ENCODE measurements at regions of chr1 and their contacts with region 1.

Region 1: DNA sequence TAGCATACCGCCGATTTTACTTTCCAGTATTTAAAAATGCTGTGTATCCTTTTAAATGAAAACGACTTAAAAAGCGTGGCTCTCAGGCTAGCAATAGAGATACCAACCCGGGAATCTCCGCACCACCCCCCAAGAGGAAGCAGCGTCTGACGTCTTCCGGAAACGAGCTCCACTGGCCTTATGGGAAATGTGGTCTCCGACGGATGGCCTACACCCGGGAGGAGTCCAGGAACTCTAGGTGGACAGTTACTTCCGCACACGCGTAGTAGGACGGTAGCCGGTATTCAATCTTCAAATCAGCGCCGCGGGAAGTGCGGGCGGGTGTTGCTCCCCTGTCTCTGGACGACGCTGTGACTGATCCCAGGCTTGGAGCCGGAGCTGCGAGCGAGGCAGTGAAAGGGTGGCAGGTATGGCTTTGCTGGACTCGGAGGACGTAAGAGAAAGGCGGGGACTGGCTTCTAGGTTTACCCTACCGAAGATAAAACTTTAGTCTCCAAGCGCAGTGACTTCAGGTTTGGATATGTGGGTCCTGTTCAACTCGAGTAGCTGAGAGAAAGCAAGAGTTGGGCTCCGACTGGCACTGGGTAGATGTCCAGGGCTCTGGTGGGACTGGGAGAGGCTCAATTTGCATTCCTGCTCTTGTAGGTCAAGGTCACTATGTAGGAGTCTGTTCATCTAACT is at the start of gene ZNF684:
- DNase-seq: peak; percentile 57 to 87 (median 81)
- ATAC-seq: peak; percentile 99
- H3K4me3 ChIP-seq: peak within 1 kb of the TSS; percentile 78
- H3K4me3 Mint-ChIP-seq: peak within 1 kb of the TSS; percentile 89 to 100 (median 98)
- H3K27ac ChIP-seq: peak within 1 kb of the TSS; percentile 80
- H3K27ac Mint-ChIP-seq: peak within 1 kb of the TSS; percentile 59 to 96 (median 93)
- H3K4me1 ChIP-seq: peaks cover 14 to 17% of the 10 kb centered on the region in 2 donors
- H3K4me1 Mint-ChIP-seq: peaks cover 22 to 29% (median 25%) of the 10 kb centered on the region in 7 donors
- H3K27me3 ChIP-seq: no peaks in the 10 kb centered on the region
- H3K27me3 Mint-ChIP-seq: peaks cover 4 to 24% (median 17%) of the 10 kb centered on the region in 5 donors
- total RNA-seq, gene ZNF684: 1.3 to 6.6 (median 3.7) TPM

Region 2: GRCh38 chr1:39886757-39887231 is 644.7 kb before region 1 on chr1:
- CTCF ChIA-PET with region 1: no interaction called
- POLR2A ChIA-PET with region 1: no interaction called
- intact Hi-C with region 1: loop called in 1 of 2 experiments (anchors 1 kb)
- DNase-seq: no peak
- ATAC-seq: no peak
- H3K4me3 ChIP-seq: no peak overlapping the region
- H3K4me3 Mint-ChIP-seq: no peak overlapping the region
- H3K27ac ChIP-seq: no peak overlapping the region
- H3K27ac Mint-ChIP-seq: no peak overlapping the region
- H3K4me1 ChIP-seq: peaks cover 9 to 11% of the 10 kb centered on the region in 2 donors
- H3K4me1 Mint-ChIP-seq: peaks cover 11 to 22% (median 15%) of the 10 kb centered on the region in 7 donors
- H3K27me3 ChIP-seq: no peaks in the 10 kb centered on the region
- H3K27me3 Mint-ChIP-seq: peaks cover under 1 to 12% (median 6%) of the 10 kb centered on the region in 5 donors

Region 3: DNA sequence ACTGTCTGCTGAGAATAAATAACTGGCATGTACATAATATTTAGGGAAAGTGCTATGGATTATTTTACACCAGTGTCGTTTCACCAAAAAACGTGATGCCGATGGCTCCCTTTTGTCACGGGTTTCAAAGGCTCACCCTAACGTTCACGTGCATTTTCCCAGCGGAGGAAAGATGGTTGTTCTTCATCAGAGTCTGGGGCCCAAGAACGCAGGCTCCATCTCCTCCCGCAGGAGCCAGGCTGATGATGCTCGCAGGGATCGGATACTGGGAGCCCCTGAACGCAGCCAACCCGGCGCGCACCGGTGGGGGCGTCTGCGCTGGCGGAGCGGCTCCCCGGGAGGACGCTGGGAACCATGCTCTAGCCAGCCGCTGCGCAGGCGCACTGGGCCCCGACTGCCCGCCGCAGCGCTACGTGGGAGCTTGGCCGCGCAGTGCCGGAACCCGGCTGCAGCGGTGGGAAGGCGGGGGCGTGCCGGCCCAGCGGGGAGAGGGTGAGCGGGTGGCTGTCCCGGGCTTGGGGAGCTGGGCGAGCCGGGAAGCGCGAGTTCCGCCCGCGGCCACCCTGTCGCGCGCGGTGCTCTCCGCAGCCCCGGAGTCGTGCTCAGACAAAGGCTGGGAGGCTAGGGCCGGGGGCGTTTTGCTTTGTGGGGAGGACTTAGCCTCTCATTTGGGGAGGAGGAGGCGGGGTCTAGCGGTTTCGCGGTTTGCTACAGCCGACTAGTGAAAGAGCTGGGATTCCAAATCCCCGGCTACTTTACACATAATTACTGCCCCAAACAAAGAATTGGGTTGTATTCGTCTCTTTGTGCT is 81.6 kb before region 1 on chr1 and contains the start of gene ZFP69B:
- CTCF ChIA-PET with region 1: no interaction called
- POLR2A ChIA-PET with region 1: interaction called, 4 read pairs
- intact Hi-C with region 1: loop called in 1 of 2 experiments (anchors 1 kb)
- DNase-seq: peak; percentile 73 to 97 (median 82)
- ATAC-seq: peak; percentile 91
- H3K4me3 ChIP-seq: peak within 1 kb of the TSS; percentile 90
- H3K4me3 Mint-ChIP-seq: peak within 1 kb of the TSS; percentile 83 to 96 (median 93)
- H3K27ac ChIP-seq: peak within 1 kb of the TSS; percentile 65
- H3K27ac Mint-ChIP-seq: peak within 1 kb of the TSS; percentile 84 to 94 (median 92)
- H3K4me1 ChIP-seq: peaks cover 11 to 19% of the 10 kb centered on the region in 2 donors
- H3K4me1 Mint-ChIP-seq: peaks cover 14 to 30% (median 25%) of the 10 kb centered on the region in 7 donors
- H3K27me3 ChIP-seq: no peaks in the 10 kb centered on the region
- H3K27me3 Mint-ChIP-seq: no peaks in the 10 kb centered on the region
- total RNA-seq, gene ZFP69B: 2.2 to 8.3 (median 5.3) TPM

Region 4: DNA sequence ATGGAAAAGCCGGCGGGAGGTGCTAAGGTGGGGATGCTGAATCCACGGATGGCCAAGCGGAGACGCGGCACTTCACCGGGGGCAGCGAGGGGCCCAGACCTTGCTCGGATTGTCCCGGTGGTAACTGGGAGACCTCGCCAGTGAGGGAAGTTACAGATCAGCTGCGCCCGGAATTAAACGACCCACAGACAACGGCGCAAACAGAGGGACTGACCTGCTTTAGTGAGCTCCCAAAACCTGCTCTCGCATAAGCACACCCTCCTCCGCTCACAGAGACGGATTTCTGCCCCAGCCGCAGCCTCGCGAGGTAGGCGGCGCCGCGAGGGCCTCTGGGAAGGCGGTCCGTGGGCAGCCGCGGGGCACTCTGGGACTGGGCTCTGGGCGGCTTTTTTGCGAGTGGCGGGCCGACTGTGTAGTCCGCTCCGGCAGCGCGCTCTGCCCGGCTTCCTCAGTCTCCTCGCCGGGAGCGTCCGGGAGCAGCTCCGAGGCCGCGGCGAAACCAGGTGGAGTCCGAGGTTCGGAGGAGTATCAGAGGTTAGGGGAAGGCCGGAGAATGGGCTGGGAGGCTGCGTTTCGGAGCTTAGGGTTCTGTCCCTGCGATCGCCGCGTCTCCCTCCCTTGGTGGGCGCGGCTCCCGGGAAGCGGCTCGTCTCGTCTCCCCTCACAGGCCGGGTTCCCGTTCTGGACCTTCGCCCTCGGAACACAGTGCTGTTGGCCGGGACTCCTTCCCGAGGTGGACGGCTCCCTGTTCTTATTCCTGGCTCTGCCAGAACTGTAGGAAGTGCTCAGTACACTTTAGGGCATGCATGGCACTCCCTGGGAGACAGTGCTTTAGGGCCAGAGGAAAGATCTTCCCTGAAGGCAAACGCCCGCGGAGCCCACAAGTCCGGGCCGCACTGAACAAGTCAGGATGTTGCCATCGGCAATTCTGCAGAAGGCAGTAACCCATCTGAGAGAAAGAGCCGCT is 22.9 kb before region 1 on chr1 and contains the start of gene EXO5:
- CTCF ChIA-PET with region 1: interaction called, 6 read pairs
- POLR2A ChIA-PET with region 1: interaction called, 20 read pairs
- intact Hi-C with region 1: loop called (anchors 1 kb)
- DNase-seq: peak; percentile 59 to 88 (median 67)
- ATAC-seq: peak; percentile 99
- H3K4me3 ChIP-seq: peak within 1 kb of the TSS; percentile 70
- H3K4me3 Mint-ChIP-seq: peak within 1 kb of the TSS; percentile 76 to 93 (median 91)
- H3K27ac ChIP-seq: peak within 1 kb of the TSS; percentile 68
- H3K27ac Mint-ChIP-seq: peak within 1 kb of the TSS; percentile 44 to 91 (median 74)
- H3K4me1 ChIP-seq: no peaks in the 10 kb centered on the region
- H3K4me1 Mint-ChIP-seq: peaks cover 9 to 18% (median 12%) of the 10 kb centered on the region in 7 donors
- H3K27me3 ChIP-seq: no peaks in the 10 kb centered on the region
- H3K27me3 Mint-ChIP-seq: no peaks in the 10 kb centered on the region
- total RNA-seq, gene EXO5: 5.2 to 14.1 (median 8.6) TPM

Region 5: GRCh38 chr1:40709100-40709801 is 177.7 kb after region 1 on chr1:
- CTCF ChIA-PET with region 1: no interaction called
- POLR2A ChIA-PET with region 1: no interaction called
- intact Hi-C with region 1: loop called in 1 of 2 experiments (anchors 1 kb)
- DNase-seq: peak; percentile 28 to 91 (median 88)
- ATAC-seq: peak; percentile 97
- H3K4me3 ChIP-seq: peak overlapping the region; percentile 68
- H3K4me3 Mint-ChIP-seq: peak overlapping the region; percentile 90 to 99 (median 94)
- H3K27ac ChIP-seq: peak overlapping the region; percentile 82
- H3K27ac Mint-ChIP-seq: peak overlapping the region; percentile 89 to 98 (median 93)
- H3K4me1 ChIP-seq: peaks cover 41 to 53% of the 10 kb centered on the region in 2 donors
- H3K4me1 Mint-ChIP-seq: peaks cover 40 to 78% (median 71%) of the 10 kb centered on the region in 7 donors
- H3K27me3 ChIP-seq: no peaks in the 10 kb centered on the region
- H3K27me3 Mint-ChIP-seq: no peaks in the 10 kb centered on the region

Region 6: GRCh38 chr1:40997096-40997495 is 465.6 kb after region 1 on chr1:
- CTCF ChIA-PET with region 1: no interaction called
- POLR2A ChIA-PET with region 1: no interaction called
- intact Hi-C with region 1: no loop called
- DNase-seq: no peak
- ATAC-seq: no peak
- H3K4me3 ChIP-seq: no peak overlapping the region
- H3K4me3 Mint-ChIP-seq: no peak overlapping the region
- H3K27ac ChIP-seq: no peak overlapping the region
- H3K27ac Mint-ChIP-seq: peak overlapping the region in 1 of 9 donors; percentile 37
- H3K4me1 ChIP-seq: no peaks in the 10 kb centered on the region
- H3K4me1 Mint-ChIP-seq: peaks cover 0 to 7% (median 3%) of the 10 kb centered on the region in 7 donors
- H3K27me3 ChIP-seq: no peaks in the 10 kb centered on the region
- H3K27me3 Mint-ChIP-seq: no peaks in the 10 kb centered on the region

Measured in naive thymus-derived CD4-positive, alpha-beta T cell (primary cell).